Activated naive CD4-positive, alpha-beta T cell treated with anti-CD3 and anti-CD28 coated beads for 36 hours (primary cell): ENCODE measurements at regions of chr4 and their contacts with region 1.

Region 1: GRCh38 chr4:153115322-153116290 is 88.6 kb upstream of the TRIM2 start:
- DNase-seq: peak; percentile 90
- H3K4me3 Mint-ChIP-seq: no peak overlapping the region
- H3K27ac Mint-ChIP-seq: no peak overlapping the region
- H3K4me1 Mint-ChIP-seq: peaks cover 8% of the 10 kb centered on the region
- H3K27me3 Mint-ChIP-seq: no peaks in the 10 kb centered on the region

Region 2: GRCh38 chr4:152106113-152106763 is 1009.4 kb before region 1 on chr4:
- CTCF ChIA-PET with region 1: no interaction called
- intact Hi-C with region 1: loop called (anchors 10 kb)
- DNase-seq: peak; percentile 61
- H3K4me3 Mint-ChIP-seq: no peak overlapping the region
- H3K27ac Mint-ChIP-seq: no peak overlapping the region
- H3K4me1 Mint-ChIP-seq: peaks cover 84% of the 10 kb centered on the region
- H3K27me3 Mint-ChIP-seq: no peaks in the 10 kb centered on the region

Region 3: DNA sequence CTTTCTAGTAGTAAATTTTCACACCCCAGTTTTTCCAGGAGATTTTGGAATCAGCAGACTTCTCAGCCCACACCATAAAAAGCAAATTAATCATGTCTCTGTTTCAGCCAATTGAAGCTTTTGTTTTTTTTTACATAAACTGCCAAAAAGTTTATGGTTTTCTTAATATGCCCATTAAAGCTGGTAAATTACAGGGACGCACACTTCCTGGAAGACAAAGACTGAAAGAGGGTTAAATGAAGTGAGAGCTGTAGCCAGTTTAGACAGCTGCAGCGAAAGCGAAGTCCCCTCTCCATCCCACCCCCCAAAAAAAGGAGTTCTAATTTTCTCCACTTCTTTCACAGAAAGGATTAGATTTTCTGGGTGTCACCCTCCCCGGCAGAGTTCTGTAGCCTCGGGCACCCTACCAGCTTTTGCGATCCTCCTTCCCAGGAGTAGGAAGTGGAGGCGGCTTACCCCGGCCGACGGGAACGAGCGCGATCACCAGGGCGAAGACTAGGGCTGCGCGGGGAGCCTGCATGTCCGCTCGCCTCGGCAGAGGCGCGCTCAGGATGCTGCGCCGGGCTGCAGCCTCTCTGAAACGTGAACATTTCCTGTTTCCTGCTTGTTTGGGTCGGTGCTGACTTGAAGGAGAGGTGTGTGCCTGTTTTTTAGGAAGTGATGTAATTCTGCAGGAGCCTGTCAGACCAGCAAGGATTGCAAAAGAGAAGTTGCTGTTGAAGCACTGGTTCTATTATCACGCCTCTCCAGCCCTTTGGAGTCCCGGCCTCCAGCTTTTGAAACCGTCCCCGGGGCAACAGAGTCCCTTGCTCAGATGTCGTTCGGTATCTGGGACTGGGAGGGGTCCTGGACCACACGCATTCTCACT is 436.0 kb before region 1 on chr4 and contains the start of gene TMEM154:
- CTCF ChIA-PET with region 1: no interaction called
- intact Hi-C with region 1: loop called (anchors 2 kb)
- DNase-seq: peak; percentile 83
- H3K4me3 Mint-ChIP-seq: peak within 1 kb of the TSS; percentile 87
- H3K27ac Mint-ChIP-seq: peak within 1 kb of the TSS; percentile 85
- H3K4me1 Mint-ChIP-seq: peaks cover 59% of the 10 kb centered on the region
- H3K27me3 Mint-ChIP-seq: no peaks in the 10 kb centered on the region
- total RNA-seq, gene TMEM154: 17.3 to 20.4 TPM

Region 4: DNA sequence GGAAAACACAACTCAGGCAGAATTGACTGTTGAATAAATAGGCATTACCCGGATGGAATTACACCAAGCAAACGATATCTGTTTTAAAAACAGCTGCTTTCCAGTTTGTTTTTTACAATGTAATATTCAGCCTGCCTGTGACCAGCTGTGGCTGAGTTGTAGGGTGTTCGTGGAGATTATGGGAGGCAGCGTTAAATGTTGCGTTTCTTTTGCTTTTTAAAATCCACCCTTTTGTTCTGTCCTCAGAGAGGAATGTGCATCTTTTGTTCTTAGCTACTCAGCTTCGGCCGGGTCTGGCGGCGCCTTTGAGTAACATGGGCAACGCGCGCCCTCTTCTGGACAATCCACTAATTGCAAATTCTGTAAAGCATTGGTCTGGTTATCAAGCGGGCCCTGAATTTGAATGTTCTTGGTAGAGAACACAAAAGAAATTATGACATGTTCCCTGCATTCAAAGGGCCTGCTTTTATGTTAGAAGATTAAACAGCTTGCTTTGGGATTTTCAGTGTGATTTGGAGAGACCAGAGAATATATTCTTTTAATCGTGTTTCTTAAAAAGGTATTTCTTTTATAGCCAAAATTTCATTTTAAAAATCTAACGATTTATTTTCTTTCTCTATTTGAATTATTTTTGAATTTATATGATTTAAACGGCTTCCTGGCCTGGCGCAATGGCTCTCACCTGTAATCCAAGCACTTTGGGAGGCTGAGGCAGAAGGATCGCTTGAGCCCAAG is 12.3 kb after region 1 on chr4:
- CTCF ChIA-PET with region 1: interaction called, 125 read pairs
- intact Hi-C with region 1: no loop called
- DNase-seq: peak; percentile 95
- H3K4me3 Mint-ChIP-seq: no peak overlapping the region
- H3K27ac Mint-ChIP-seq: no peak overlapping the region
- H3K4me1 Mint-ChIP-seq: peaks cover 9% of the 10 kb centered on the region
- H3K27me3 Mint-ChIP-seq: no peaks in the 10 kb centered on the region

Region 5: DNA sequence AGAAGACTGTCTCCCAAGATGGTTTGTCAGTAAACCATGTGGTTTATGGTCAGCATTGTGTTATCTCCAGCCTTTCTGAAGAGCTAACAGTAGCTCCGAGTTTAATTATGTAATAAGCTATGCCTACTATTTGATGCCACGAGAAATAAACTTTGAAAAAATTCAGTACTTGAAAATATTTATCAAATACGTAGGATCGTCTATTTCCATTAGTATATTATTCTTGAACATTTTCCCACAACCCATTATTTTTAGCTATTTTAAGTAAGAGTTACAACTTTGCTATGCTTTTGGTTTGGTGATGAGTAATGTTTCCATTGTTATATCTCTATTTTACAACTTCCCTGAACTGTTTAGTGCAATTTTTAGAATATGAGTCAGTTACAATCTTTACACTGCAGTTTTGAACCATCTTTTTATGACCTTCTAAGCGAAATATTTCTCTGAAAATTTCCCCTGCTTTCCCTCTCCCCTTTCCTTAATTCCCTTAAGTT is 44.2 kb after region 1 on chr4:
- CTCF ChIA-PET with region 1: no interaction called
- intact Hi-C with region 1: loop called (anchors 1 kb)
- DNase-seq: no peak
- H3K4me3 Mint-ChIP-seq: no peak overlapping the region
- H3K27ac Mint-ChIP-seq: peak overlapping the region; percentile 90
- H3K4me1 Mint-ChIP-seq: peaks cover 54% of the 10 kb centered on the region
- H3K27me3 Mint-ChIP-seq: no peaks in the 10 kb centered on the region

Region 6: DNA sequence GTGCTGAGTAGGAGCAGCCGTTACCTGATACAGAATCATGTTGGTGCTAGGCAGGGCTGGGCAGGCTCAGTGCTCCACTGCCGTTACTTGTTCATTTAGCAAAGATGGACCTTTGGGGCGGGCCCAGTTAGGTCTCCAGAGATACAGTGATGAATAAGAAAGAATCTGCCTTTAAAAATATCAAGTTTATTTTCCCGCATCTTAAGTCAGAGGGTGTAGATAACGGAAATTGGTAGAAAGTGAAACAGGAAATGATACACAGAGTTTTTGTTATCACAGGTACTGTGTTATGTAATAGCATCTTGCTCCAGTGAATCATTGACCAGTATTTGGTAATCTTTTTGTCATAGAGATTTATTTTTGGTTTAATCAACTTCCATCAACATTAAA is 356.1 kb after region 1 on chr4:
- CTCF ChIA-PET with region 1: no interaction called
- intact Hi-C with region 1: loop called (anchors 2 kb)
- DNase-seq: peak; percentile 85
- H3K4me3 Mint-ChIP-seq: peak overlapping the region; percentile 95
- H3K27ac Mint-ChIP-seq: peak overlapping the region; percentile 96
- H3K4me1 Mint-ChIP-seq: peaks cover 70% of the 10 kb centered on the region
- H3K27me3 Mint-ChIP-seq: no peaks in the 10 kb centered on the region

Region 7: DNA sequence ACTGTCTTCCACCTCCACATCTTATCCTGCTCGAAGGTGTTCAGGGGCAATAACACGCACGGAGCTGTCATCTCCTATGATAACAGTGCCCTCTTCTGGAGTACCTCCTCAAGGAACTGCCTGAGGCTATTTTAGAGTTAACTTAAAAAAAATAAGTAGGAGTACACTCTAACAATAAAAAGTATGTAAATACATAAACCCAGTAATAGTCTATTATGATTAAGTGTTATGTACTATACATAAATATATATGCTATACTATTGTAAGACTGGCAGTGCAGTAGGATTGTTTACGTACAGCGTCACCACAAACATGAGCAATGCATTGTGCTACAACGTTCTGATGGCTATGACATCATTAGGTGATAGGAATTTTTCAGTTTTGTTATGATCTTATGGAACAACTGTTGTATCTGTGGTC is 534.0 kb after region 1 on chr4:
- CTCF ChIA-PET with region 1: no interaction called
- intact Hi-C with region 1: loop called (anchors 1 kb)
- DNase-seq: peak; percentile 44
- H3K4me3 Mint-ChIP-seq: no peak overlapping the region
- H3K27ac Mint-ChIP-seq: no peak overlapping the region
- H3K4me1 Mint-ChIP-seq: peaks cover 32% of the 10 kb centered on the region
- H3K27me3 Mint-ChIP-seq: no peaks in the 10 kb centered on the region